GM10248 (cell line): ENCODE measurements at regions of chr1 and their contacts with region 1.

Region 1: DNA sequence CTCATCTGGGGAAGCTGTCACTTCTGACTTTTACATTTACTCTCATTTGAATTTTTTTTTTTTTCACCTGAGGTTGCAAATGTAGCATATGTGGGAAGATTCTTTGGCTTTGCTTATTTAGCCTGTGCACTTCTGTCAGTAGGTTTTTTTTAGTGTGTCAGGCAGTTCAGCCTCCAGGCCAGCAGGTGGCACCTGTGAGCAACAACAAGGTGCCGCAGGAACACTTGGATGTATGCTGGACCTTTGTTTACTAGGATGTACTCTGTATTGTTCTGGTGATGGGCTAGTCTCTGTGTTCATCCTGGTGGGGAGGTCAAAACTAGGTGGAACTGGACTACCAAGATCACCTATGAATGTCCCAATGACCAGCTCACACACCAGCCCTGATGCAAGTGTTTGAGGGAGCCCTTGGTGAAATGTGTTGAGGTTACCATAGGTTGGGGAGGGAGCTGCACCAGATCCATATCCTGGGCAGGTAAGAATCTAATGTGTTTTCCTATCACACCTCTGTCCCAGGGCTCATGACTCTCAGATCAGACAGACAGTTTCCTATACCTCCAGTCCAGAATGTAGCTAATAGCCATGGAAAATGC is 618.2 kb downstream of the BRINP3 start:
- DNase-seq: peak; percentile 20
- CTCF ChIP-seq: peak; percentile 78

Region 2: GRCh38 chr1:189803364-189803763 is 56.1 kb before region 1 on chr1:
- CTCF ChIA-PET with region 1: no interaction called
- POLR2A ChIA-PET with region 1: no interaction called
- DNase-seq: no peak
- CTCF ChIP-seq: no peak

Region 3: GRCh38 chr1:189834813-189835212 is 24.7 kb before region 1 on chr1:
- CTCF ChIA-PET with region 1: interaction called, 12 read pairs
- POLR2A ChIA-PET with region 1: no interaction called
- DNase-seq: no peak
- CTCF ChIP-seq: no peak

Region 4: GRCh38 chr1:190029441-190029840 is 170.0 kb after region 1 on chr1:
- CTCF ChIA-PET with region 1: no interaction called
- POLR2A ChIA-PET with region 1: no interaction called
- DNase-seq: no peak
- CTCF ChIP-seq: no peak

Region 5: DNA sequence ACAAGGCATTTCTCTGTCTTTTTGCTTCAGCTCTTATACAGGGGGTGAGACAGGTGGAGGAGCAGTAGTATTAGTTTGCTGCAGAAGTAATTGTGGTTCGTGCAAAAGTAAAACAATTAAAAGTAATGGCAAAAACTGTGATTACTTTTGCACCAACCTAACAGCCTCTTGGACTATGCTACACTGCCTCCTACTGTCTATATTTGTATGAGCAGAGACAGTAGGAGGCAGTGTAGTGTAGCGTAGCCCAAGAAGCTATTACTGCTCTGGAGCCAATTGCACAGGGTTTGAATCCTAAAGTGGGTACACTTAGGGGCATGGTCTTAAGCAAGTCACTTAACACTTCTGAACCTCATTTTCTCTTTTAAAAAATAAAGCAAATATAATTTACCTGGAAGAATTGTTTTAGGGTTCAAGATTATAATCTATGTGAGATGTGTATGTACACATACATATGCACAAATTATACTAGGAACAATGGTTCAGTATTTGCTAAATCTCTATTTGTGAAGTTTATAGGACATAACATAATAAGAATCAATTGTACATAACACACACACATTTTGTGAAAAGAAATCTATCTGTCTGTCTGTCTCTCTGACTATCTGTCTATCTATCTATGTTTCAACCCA is 514.3 kb after region 1 on chr1:
- CTCF ChIA-PET with region 1: interaction called, 19 read pairs
- POLR2A ChIA-PET with region 1: no interaction called
- DNase-seq: peak; percentile 6
- CTCF ChIP-seq: peak; percentile 63